ENCODE measurements at regions of chr5 and their contacts with region 1.

Region 1: DNA sequence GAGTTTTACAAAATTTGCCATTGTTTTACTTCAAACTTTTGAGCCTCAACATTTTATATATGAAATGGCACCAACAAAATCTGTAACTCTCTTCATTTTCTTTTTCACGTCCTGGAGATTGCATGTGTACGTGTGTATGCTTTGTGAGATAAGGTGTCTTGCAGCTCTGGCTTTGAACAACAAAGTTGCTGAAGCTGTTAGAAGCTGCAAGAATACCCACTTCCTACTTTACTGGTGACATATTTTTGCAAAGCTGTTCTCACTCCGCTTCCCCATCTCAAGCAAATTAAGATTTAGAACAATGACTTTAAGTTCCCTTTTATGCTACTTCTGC is 41.8 kb downstream of the FYB1 start:
- DNase-seq: peak; percentile 67 to 78 (median 71)
- H3K4me3 ChIP-seq: peak overlapping the region; percentile 18 to 25
- H3K4me3 Mint-ChIP-seq: peak overlapping the region; percentile 66 to 81 (median 75)
- H3K27ac ChIP-seq: peak overlapping the region; percentile 56
- H3K27ac Mint-ChIP-seq: peak overlapping the region; percentile 91 to 97 (median 92)
- H3K4me1 ChIP-seq: peaks cover 100% of the 10 kb centered on the region
- H3K4me1 Mint-ChIP-seq: peaks cover 87 to 98% (median 93%) of the 10 kb centered on the region in 4 donors
- H3K27me3 ChIP-seq: no peaks in the 10 kb centered on the region
- H3K27me3 Mint-ChIP-seq: no peaks in the 10 kb centered on the region

Region 2: DNA sequence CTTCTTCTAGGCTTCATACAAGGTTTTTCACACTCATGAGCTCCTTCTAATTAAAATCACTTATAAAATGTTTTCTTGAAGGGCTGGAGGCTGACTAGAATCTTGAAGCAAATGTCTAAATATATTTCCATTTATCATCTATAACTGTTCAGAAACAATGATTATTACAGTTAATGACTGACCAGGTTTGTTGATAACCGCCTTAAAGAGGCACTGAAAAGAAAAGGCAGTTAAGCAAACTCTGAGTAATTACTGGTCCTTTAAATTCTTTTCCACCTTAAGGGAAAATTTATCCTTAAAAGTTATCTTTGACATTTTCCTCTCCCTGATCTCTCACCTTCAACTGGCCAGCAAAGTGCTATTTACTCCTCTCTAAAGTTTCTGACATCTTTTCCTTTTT is 146.6 kb before region 1 on chr5:
- CTCF ChIA-PET with region 1: no interaction called
- POLR2A ChIA-PET with region 1: no interaction called
- intact Hi-C with region 1: no loop called
- DNase-seq: no peak
- H3K4me3 ChIP-seq: no peak overlapping the region
- H3K4me3 Mint-ChIP-seq: peak overlapping the region in 2 of 8 donors; percentile 1
- H3K27ac ChIP-seq: no peak overlapping the region
- H3K27ac Mint-ChIP-seq: peak overlapping the region; percentile 5 to 88 (median 19)
- H3K4me1 ChIP-seq: peaks cover 30% of the 10 kb centered on the region
- H3K4me1 Mint-ChIP-seq: peaks cover 27 to 51% (median 43%) of the 10 kb centered on the region in 4 donors
- H3K27me3 ChIP-seq: no peaks in the 10 kb centered on the region
- H3K27me3 Mint-ChIP-seq: no peaks in the 10 kb centered on the region

Region 3: GRCh38 chr5:39117401-39117800 is 60.2 kb before region 1 on chr5:
- CTCF ChIA-PET with region 1: no interaction called
- POLR2A ChIA-PET with region 1: no interaction called
- intact Hi-C with region 1: no loop called
- DNase-seq: no peak
- H3K4me3 ChIP-seq: no peak overlapping the region
- H3K4me3 Mint-ChIP-seq: no peak overlapping the region
- H3K27ac ChIP-seq: no peak overlapping the region
- H3K27ac Mint-ChIP-seq: peak overlapping the region in 6 of 7 donors; percentile 61 to 78 (median 70)
- H3K4me1 ChIP-seq: peaks cover 26% of the 10 kb centered on the region
- H3K4me1 Mint-ChIP-seq: peaks cover 20 to 44% (median 27%) of the 10 kb centered on the region in 4 donors
- H3K27me3 ChIP-seq: no peaks in the 10 kb centered on the region
- H3K27me3 Mint-ChIP-seq: no peaks in the 10 kb centered on the region

Region 4: DNA sequence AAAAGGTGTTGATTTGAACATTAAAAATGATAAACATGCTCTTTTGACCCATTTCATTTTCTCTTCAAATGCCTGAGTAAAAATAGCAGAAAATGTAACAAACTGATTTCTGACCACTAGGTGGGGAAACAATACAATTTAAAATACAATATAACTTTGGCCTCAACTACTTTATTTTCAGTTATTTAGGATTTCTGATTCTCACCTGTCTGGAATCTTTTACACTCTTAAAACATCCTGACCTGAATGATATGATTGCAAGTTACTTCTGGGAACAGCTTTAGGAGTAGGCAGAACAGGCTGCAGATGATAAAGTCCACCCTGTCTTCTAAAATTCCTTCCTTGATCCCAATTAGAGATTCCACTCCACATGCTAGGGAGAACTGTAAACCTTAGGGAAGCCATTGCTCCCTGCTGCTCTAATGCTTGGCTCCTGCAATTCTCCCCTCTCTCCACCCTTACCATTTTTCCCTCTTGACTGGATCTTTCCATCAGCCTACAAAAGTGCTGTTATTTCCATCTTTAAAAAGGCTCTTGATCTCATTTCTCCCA is 28.5 kb before region 1 on chr5:
- CTCF ChIA-PET with region 1: interaction called, 11 read pairs
- POLR2A ChIA-PET with region 1: interaction called, 42 read pairs
- intact Hi-C with region 1: no loop called
- DNase-seq: peak in 4 of 5 donors; percentile 43 to 59 (median 56)
- H3K4me3 ChIP-seq: no peak overlapping the region
- H3K4me3 Mint-ChIP-seq: peak overlapping the region in 4 of 8 donors; percentile 2 to 36 (median 27)
- H3K27ac ChIP-seq: no peak overlapping the region
- H3K27ac Mint-ChIP-seq: peak overlapping the region; percentile 62 to 94 (median 86)
- H3K4me1 ChIP-seq: peaks cover 84% of the 10 kb centered on the region
- H3K4me1 Mint-ChIP-seq: peaks cover 59 to 87% (median 71%) of the 10 kb centered on the region in 4 donors
- H3K27me3 ChIP-seq: no peaks in the 10 kb centered on the region
- H3K27me3 Mint-ChIP-seq: no peaks in the 10 kb centered on the region

Region 5: DNA sequence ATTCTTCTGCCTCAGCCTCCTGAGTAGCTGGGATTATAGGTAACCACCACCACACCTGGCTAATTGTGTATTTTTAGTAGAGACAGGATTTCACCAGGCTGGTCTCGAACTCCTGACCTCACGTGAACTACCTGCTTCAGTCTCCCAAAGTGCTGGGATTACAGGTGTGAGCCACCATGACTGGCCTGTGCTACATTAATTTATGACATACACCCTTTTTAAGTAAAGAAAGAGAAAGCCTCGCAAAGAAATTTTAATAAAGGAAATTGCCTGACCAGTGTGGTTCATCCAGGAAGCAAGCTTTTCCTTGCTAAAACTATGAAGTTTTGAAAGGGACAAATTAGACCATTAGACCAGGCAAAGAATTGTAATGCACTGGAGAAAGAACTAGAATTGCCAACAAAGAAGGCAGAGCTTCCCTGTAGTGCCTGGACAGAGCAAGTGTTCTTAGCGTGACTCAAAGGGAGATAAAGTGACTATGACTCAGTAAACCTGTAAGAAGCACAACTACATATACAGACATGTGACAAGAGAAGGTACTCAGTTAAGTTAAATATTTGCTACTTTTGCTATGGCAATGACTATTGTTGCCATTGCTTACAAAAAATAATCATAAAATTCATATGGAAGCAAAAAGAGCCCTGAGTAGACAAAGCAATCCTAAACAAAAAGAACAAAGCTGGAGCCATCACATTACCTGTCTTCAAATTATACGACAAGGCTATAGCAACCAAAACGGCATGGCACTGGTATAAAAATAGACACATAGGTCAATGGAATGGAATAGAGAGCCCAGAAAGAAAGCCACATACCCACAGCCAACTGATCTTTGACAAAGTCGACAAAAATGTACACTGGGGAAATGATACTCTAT is 12.8 kb before region 1 on chr5:
- CTCF ChIA-PET with region 1: interaction called, 9 read pairs
- POLR2A ChIA-PET with region 1: interaction called, 1,810 read pairs
- intact Hi-C with region 1: loop called (anchors 1 kb)
- DNase-seq: peak in 2 of 5 donors; percentile 37 to 62
- H3K4me3 ChIP-seq: peak overlapping the region in 1 of 2 donors; percentile 34
- H3K4me3 Mint-ChIP-seq: peak overlapping the region; percentile 42 to 83 (median 78)
- H3K27ac ChIP-seq: peak overlapping the region; percentile 54
- H3K27ac Mint-ChIP-seq: peak overlapping the region; percentile 87 to 94 (median 94)
- H3K4me1 ChIP-seq: peaks cover 100% of the 10 kb centered on the region
- H3K4me1 Mint-ChIP-seq: peaks cover 68 to 96% (median 80%) of the 10 kb centered on the region in 4 donors
- H3K27me3 ChIP-seq: no peaks in the 10 kb centered on the region
- H3K27me3 Mint-ChIP-seq: no peaks in the 10 kb centered on the region

Region 6: GRCh38 chr5:39194466-39195136 is 17.0 kb after region 1 on chr5:
- CTCF ChIA-PET with region 1: interaction called, 252 read pairs
- POLR2A ChIA-PET with region 1: interaction called, 1,810 read pairs
- intact Hi-C with region 1: loop called (anchors 1 kb)
- DNase-seq: no peak
- H3K4me3 ChIP-seq: peak overlapping the region; percentile 13 to 49
- H3K4me3 Mint-ChIP-seq: peak overlapping the region; percentile 84 to 92 (median 88)
- H3K27ac ChIP-seq: peak overlapping the region; percentile 59
- H3K27ac Mint-ChIP-seq: peak overlapping the region; percentile 90 to 98 (median 95)
- H3K4me1 ChIP-seq: peaks cover 77% of the 10 kb centered on the region
- H3K4me1 Mint-ChIP-seq: peaks cover 53 to 79% (median 66%) of the 10 kb centered on the region in 4 donors
- H3K27me3 ChIP-seq: no peaks in the 10 kb centered on the region
- H3K27me3 Mint-ChIP-seq: no peaks in the 10 kb centered on the region

Region 7: GRCh38 chr5:39209924-39210323 is 32.3 kb after region 1 on chr5:
- CTCF ChIA-PET with region 1: interaction called, 14 read pairs
- POLR2A ChIA-PET with region 1: interaction called, 1,810 read pairs
- intact Hi-C with region 1: loop called (anchors 1 kb)
- DNase-seq: peak; percentile 87 to 93 (median 88)
- H3K4me3 ChIP-seq: peak overlapping the region; percentile 45 to 48
- H3K4me3 Mint-ChIP-seq: peak overlapping the region; percentile 76 to 85 (median 84)
- H3K27ac ChIP-seq: peak overlapping the region; percentile 84
- H3K27ac Mint-ChIP-seq: peak overlapping the region; percentile 91 to 98 (median 95)
- H3K4me1 ChIP-seq: peaks cover 98% of the 10 kb centered on the region
- H3K4me1 Mint-ChIP-seq: peaks cover 68 to 100% (median 88%) of the 10 kb centered on the region in 4 donors
- H3K27me3 ChIP-seq: no peaks in the 10 kb centered on the region
- H3K27me3 Mint-ChIP-seq: no peaks in the 10 kb centered on the region

Region 8: GRCh38 chr5:39231705-39232525 is 54.3 kb after region 1 on chr5:
- CTCF ChIA-PET with region 1: no interaction called
- POLR2A ChIA-PET with region 1: no interaction called
- intact Hi-C with region 1: no loop called
- DNase-seq: peak in 1 of 5 donors; percentile 51
- H3K4me3 ChIP-seq: no peak overlapping the region
- H3K4me3 Mint-ChIP-seq: peak overlapping the region in 3 of 8 donors; percentile 18 to 56 (median 45)
- H3K27ac ChIP-seq: no peak overlapping the region
- H3K27ac Mint-ChIP-seq: peak overlapping the region in 4 of 7 donors; percentile 8 to 86 (median 56)
- H3K4me1 ChIP-seq: peaks cover 12% of the 10 kb centered on the region
- H3K4me1 Mint-ChIP-seq: peaks cover 8 to 11% (median 10%) of the 10 kb centered on the region in 4 donors
- H3K27me3 ChIP-seq: no peaks in the 10 kb centered on the region
- H3K27me3 Mint-ChIP-seq: no peaks in the 10 kb centered on the region